A673 (cell line): ENCODE measurements at regions of chr20 and their contacts with region 1.

Region 1: DNA sequence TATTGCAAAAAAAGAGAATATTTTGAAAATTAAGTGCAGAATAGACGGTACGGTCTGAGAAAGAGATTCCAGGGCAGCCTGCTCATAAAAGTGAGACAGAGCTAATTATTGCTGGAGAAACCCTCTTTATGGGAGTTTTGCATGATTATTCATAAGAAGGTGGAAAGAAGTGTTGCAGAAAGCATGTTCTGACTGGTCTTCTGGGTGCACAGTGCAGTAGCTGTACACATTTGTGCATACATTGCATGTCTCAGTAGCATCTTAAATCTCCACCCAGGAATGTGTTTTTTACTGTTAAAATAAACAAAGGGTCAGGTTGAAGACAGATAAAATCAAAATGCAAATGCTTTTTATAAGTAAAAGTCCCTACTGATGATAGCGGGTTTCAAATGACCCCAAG is 1813.6 kb upstream of the DEFB115 start:
- DNase-seq: no peak
- H3K4me3 ChIP-seq: no peak overlapping the region
- H3K27ac ChIP-seq: no peak overlapping the region
- H3K4me1 ChIP-seq: no peaks in the 10 kb centered on the region
- H3K27me3 ChIP-seq: no peaks in the 10 kb centered on the region
- CTCF ChIP-seq: no peak

Region 2: DNA sequence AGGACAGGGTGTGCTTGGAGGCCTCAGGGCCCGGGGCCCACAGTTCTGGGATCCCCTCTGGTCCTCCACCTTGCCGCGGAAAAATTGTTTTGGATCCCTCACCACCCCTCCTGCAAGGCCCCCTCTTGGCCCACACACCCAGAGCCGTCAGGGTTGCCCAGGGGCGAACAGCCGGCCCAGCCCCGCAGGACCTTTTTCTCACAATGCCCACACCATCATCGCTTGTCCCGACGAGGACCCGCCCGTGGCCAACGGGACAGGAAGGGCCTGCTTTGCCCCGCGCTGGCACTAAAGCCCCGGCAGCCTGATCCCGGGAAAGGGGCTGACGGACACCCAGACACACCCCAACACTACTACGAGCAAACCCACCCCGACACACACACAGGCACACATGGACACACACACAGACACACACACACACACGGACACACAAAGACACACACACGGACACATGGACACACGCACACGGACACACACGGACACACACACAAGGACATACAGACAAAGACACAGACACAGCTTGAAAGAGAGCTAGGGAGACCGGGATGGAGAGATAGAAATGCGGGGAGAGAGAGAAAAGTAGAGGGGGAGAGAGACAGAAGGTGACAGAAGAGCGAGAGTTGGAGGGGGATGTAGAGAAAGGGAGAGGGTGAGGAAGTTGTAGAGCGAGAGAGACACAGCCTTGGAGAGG is 320.1 kb after region 1 on chr20:
- CTCF ChIA-PET with region 1: no interaction called
- POLR2A ChIA-PET with region 1: no interaction called
- intact Hi-C with region 1: loop called (anchors 5 kb)
- DNase-seq: no peak
- H3K4me3 ChIP-seq: no peak overlapping the region
- H3K27ac ChIP-seq: no peak overlapping the region
- H3K4me1 ChIP-seq: no peaks in the 10 kb centered on the region
- H3K27me3 ChIP-seq: no peaks in the 10 kb centered on the region
- CTCF ChIP-seq: no peak

Region 3: GRCh38 chr20:31260326-31260932 is 1816.6 kb after region 1 on chr20:
- CTCF ChIA-PET with region 1: no interaction called
- POLR2A ChIA-PET with region 1: no interaction called
- intact Hi-C with region 1: loop called (anchors 5 kb)
- DNase-seq: peak; percentile 43
- H3K4me3 ChIP-seq: no peak overlapping the region
- H3K27ac ChIP-seq: no peak overlapping the region
- H3K4me1 ChIP-seq: no peaks in the 10 kb centered on the region
- H3K27me3 ChIP-seq: no peaks in the 10 kb centered on the region
- CTCF ChIP-seq: peak; percentile 72

Region 4: GRCh38 chr20:31308535-31309162 is 1864.8 kb after region 1 on chr20 and contains the start of gene DEFB116:
- CTCF ChIA-PET with region 1: no interaction called
- POLR2A ChIA-PET with region 1: no interaction called
- intact Hi-C with region 1: loop called (anchors 2 kb)
- DNase-seq: no peak
- H3K4me3 ChIP-seq: no peak within 1 kb of the TSS
- H3K27ac ChIP-seq: no peak within 1 kb of the TSS
- H3K4me1 ChIP-seq: no peaks in the 10 kb centered on the region
- H3K27me3 ChIP-seq: no peaks in the 10 kb centered on the region
- CTCF ChIP-seq: no peak
- total RNA-seq, gene DEFB116: not detected in 2 replicates